ENCODE measurements at regions of chr3 and their contacts with region 1.

Region 1: GRCh38 chr3:21894459-21895340 is 143.7 kb upstream of the ZNF385D start:
- DNase-seq: peak; percentile 6
- H3K4me3 ChIP-seq: no peak overlapping the region; a peak in 1 of 4 replicates
- H3K27ac ChIP-seq: no peak overlapping the region; a peak in 1 of 4 replicates
- H3K4me1 ChIP-seq: peaks cover 0 to 5% of the 10 kb centered on the region in 2 experiments; a peak in 2 of 4 replicates
- H3K27me3 ChIP-seq: no peaks in the 10 kb centered on the region
- CTCF ChIP-seq: peak; percentile 89
- EP300 ChIP-seq: no peak
- RAD21 ChIP-seq: peak; percentile 87

Region 2: DNA sequence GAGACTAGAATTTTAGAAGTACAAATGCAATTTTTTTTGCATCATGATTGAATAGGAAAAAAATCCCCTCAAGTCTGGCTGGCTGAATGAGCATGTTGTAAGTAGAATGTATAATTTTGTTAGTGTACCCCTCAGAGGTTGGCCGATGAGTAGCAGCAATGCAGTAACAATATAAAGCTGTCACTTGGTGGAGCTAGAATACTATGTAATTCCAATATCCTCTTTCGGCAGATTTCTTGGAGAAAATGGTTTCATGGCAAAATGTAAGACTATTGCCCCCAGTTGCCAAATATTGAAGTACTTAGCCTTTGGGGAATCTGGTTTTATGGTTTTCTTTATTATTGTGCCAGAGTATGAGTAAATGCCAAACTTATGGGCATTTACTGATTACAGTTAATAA is 1668.9 kb before region 1 on chr3:
- CTCF ChIA-PET with region 1: interaction called, 25 read pairs
- POLR2A ChIA-PET with region 1: no interaction called
- DNase-seq: peak; percentile 28
- H3K4me3 ChIP-seq: no peak overlapping the region
- H3K27ac ChIP-seq: no peak overlapping the region
- H3K4me1 ChIP-seq: no peaks in the 10 kb centered on the region
- H3K27me3 ChIP-seq: no peaks in the 10 kb centered on the region
- CTCF ChIP-seq: peak; percentile 53
- EP300 ChIP-seq: no peak
- RAD21 ChIP-seq: peak; percentile 81

Region 3: DNA sequence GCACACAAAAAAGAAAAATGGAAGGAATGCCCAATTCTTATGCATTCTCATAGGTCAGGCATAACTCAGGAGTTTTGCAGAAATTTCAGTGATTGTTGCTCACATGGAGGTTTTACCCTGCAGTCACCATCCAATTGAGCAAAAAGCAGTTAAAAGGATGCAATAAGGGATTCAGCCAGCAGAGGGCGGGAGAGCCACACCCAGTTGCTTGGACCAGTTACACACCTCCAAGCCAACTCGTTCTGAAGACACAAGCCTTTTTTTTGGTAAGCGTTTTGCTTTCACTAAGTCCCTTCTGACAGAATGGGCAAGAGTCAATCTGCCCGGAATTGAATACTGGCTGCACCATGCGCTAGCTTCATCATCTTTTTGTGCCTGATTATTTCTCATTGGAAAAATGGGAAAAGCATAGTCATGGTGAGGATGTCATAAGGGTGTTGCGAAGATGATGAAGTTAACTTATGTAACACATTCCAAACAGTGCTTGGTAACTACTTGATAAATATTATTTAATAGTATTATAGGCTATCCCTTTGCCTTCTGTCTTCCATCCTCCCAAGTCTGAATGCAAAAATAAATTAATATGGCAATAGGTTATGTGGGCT is 1554.3 kb before region 1 on chr3:
- CTCF ChIA-PET with region 1: interaction called, 10 read pairs
- POLR2A ChIA-PET with region 1: no interaction called
- DNase-seq: peak; percentile 49
- H3K4me3 ChIP-seq: peak overlapping the region in 1 of 2 experiments; percentile 23; a peak in 1 of 4 replicates
- H3K27ac ChIP-seq: no peak overlapping the region
- H3K4me1 ChIP-seq: peaks cover 0 to 3% of the 10 kb centered on the region in 2 experiments; a peak in 2 of 4 replicates
- H3K27me3 ChIP-seq: no peaks in the 10 kb centered on the region
- CTCF ChIP-seq: peak; percentile 91
- EP300 ChIP-seq: no peak
- RAD21 ChIP-seq: peak; percentile 97

Region 4: GRCh38 chr3:21752749-21753347 is 141.9 kb before region 1 on chr3:
- CTCF ChIA-PET with region 1: interaction called, 117 read pairs
- POLR2A ChIA-PET with region 1: no interaction called
- DNase-seq: peak; percentile 60
- H3K4me3 ChIP-seq: no peak overlapping the region
- H3K27ac ChIP-seq: peak overlapping the region in 1 of 2 experiments; percentile 85; a peak in 2 of 4 replicates
- H3K4me1 ChIP-seq: peaks cover 0 to 14% of the 10 kb centered on the region in 2 experiments; a peak in 2 of 4 replicates
- H3K27me3 ChIP-seq: no peaks in the 10 kb centered on the region
- CTCF ChIP-seq: peak; percentile 74
- EP300 ChIP-seq: peak in 1 of 2 experiments; percentile 48; a peak in 2 of 4 replicates
- RAD21 ChIP-seq: peak; percentile 91

Region 5: GRCh38 chr3:21879184-21879886 is 15.4 kb before region 1 on chr3:
- CTCF ChIA-PET with region 1: interaction called, 25 read pairs
- POLR2A ChIA-PET with region 1: no interaction called
- DNase-seq: no peak
- H3K4me3 ChIP-seq: no peak overlapping the region
- H3K27ac ChIP-seq: no peak overlapping the region
- H3K4me1 ChIP-seq: no peaks in the 10 kb centered on the region
- H3K27me3 ChIP-seq: no peaks in the 10 kb centered on the region
- CTCF ChIP-seq: no peak
- EP300 ChIP-seq: no peak
- RAD21 ChIP-seq: no peak

Region 6: GRCh38 chr3:21912711-21913110 is 18.0 kb after region 1 on chr3:
- CTCF ChIA-PET with region 1: interaction called, 12 read pairs
- POLR2A ChIA-PET with region 1: no interaction called
- DNase-seq: no peak
- H3K4me3 ChIP-seq: no peak overlapping the region
- H3K27ac ChIP-seq: no peak overlapping the region
- H3K4me1 ChIP-seq: no peaks in the 10 kb centered on the region; a peak in 1 of 4 replicates
- H3K27me3 ChIP-seq: no peaks in the 10 kb centered on the region
- CTCF ChIP-seq: no peak
- EP300 ChIP-seq: no peak
- RAD21 ChIP-seq: no peak

Region 7: DNA sequence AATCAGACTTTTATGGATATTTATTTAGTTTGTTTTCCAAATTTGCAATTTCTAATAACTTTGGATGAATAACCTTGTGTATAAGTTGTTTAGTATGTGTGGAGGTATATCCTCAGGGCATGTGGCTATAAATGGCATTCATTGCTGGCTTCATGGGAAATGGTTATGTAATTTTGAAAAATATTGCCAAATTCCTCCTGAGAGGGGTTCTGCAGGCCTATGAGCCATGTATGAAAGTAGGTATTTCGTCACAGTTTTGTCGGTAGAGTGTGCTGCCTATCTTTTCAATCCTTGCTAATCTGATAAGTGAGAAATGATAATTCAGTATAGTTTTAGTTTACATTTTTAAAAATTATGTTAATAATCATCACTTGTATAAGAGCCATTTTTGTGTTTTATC is 112.7 kb after region 1 on chr3:
- CTCF ChIA-PET with region 1: no interaction called
- POLR2A ChIA-PET with region 1: no interaction called
- DNase-seq: no peak
- H3K4me3 ChIP-seq: no peak overlapping the region
- H3K27ac ChIP-seq: no peak overlapping the region
- H3K4me1 ChIP-seq: no peaks in the 10 kb centered on the region
- H3K27me3 ChIP-seq: no peaks in the 10 kb centered on the region
- CTCF ChIP-seq: no peak
- EP300 ChIP-seq: no peak
- RAD21 ChIP-seq: no peak

Measured in SK-N-SH (cell line).